ENCODE measurements at regions of chr16 and their contacts with region 1.

Region 1: GRCh38 chr16:56931892-56932720 is at the start of gene HERPUD1:
- DNase-seq: peak; percentile 100
- H3K4me3 Mint-ChIP-seq: peak within 1 kb of the TSS; percentile 96
- H3K27ac Mint-ChIP-seq: peak within 1 kb of the TSS; percentile 97
- H3K4me1 Mint-ChIP-seq: peaks cover 35% of the 10 kb centered on the region
- H3K27me3 Mint-ChIP-seq: no peaks in the 10 kb centered on the region
- total RNA-seq, gene HERPUD1: 155 and 164 TPM in 2 replicates

Region 2: GRCh38 chr16:56450986-56451752 is 480.9 kb before region 1 on chr16 and contains the starts of genes NUDT21 and OGFOD1:
- intact Hi-C with region 1: loop called (anchors 5 kb)
- DNase-seq: peak; percentile 97
- H3K4me3 Mint-ChIP-seq: peak within 1 kb of the TSS; percentile 94
- H3K27ac Mint-ChIP-seq: peak within 1 kb of the TSS; percentile 95
- H3K4me1 Mint-ChIP-seq: peaks cover 41% of the 10 kb centered on the region
- H3K27me3 Mint-ChIP-seq: no peaks in the 10 kb centered on the region
- total RNA-seq, gene NUDT21: 282 and 297 TPM in 2 replicates
- total RNA-seq, gene OGFOD1: 87.0 and 89.2 TPM in 2 replicates

Region 3: DNA sequence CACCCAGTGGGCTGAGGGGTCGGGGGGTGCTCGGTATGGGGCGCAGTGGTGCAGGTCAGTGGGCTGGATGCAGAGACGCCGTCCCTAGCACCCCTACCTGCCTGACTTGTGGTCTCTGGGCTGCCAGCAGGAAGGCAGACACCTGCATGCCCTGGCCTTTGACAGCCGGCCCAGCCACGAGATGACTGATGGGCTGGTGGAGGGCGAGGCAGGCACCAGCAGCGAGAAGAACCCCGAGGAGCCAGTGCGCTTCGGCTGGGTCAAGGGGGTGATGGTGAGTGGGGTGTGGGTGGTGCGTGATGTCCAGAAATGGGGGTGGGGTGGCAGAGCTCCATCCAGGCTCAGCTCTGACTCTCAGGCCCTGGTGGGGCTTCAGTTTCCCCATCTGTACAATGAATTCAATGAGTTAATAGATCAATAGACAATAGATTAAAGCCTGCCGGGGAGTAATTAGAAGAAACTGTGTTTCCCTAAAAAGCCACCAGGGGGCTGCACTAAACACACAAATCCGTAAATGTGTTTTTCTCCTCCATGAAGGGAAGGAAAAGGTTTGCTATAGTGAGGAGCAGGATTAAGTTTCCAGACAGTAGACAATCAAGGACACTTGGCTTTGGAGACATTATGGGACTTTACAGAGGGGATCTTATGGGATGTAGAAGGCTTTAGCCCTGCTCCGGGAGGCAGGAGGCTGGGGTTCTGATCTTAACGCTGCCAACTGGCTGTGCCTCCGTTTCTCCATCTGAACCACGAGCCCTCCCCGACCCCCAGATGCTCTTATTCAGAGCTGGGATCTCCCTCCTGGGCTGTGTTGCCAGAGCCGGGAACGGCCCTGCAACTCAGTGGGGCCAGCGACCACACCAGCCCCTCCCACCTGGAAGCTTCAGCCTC is 64.9 kb before region 1 on chr16:
- intact Hi-C with region 1: loop called (anchors 2 kb)
- DNase-seq: peak; percentile 84
- H3K4me3 Mint-ChIP-seq: no peak overlapping the region
- H3K27ac Mint-ChIP-seq: no peak overlapping the region
- H3K4me1 Mint-ChIP-seq: peaks cover 19% of the 10 kb centered on the region
- H3K27me3 Mint-ChIP-seq: no peaks in the 10 kb centered on the region

Region 4: GRCh38 chr16:56944954-56945839 is 13.1 kb after region 1 on chr16:
- intact Hi-C with region 1: loop called (anchors 1 kb)
- DNase-seq: no peak
- H3K4me3 Mint-ChIP-seq: peak overlapping the region; percentile 23
- H3K27ac Mint-ChIP-seq: peak overlapping the region; percentile 92
- H3K4me1 Mint-ChIP-seq: peaks cover 39% of the 10 kb centered on the region
- H3K27me3 Mint-ChIP-seq: no peaks in the 10 kb centered on the region

Region 5: GRCh38 chr16:57289391-57290257 is 357.5 kb after region 1 on chr16:
- intact Hi-C with region 1: no loop called
- DNase-seq: peak; percentile 60
- H3K4me3 Mint-ChIP-seq: peak overlapping the region; percentile 45
- H3K27ac Mint-ChIP-seq: peak overlapping the region; percentile 62
- H3K4me1 Mint-ChIP-seq: peaks cover 18% of the 10 kb centered on the region
- H3K27me3 Mint-ChIP-seq: peaks cover 7% of the 10 kb centered on the region

Region 6: GRCh38 chr16:57600048-57600835 is 668.1 kb after region 1 on chr16:
- intact Hi-C with region 1: loop called (anchors 10 kb)
- DNase-seq: peak; percentile 80
- H3K4me3 Mint-ChIP-seq: no peak overlapping the region
- H3K27ac Mint-ChIP-seq: peak overlapping the region; percentile 95
- H3K4me1 Mint-ChIP-seq: peaks cover 41% of the 10 kb centered on the region
- H3K27me3 Mint-ChIP-seq: peaks cover 3% of the 10 kb centered on the region

Measured in activated CD4-positive, alpha-beta T cell treated with anti-CD3 and anti-CD28 coated beads, Interleukin-2, amount 10 ng/mL, durations not matched to agents 24 days and 14 days (primary cell).